GM12878 (cell line): ENCODE measurements at regions of chr14 and their contacts with region 1.

Region 1: GRCh38 chr14:71103662-71104484 is 196.6 kb downstream of the PCNX1 start:
- DNase-seq: peak; percentile 13
- ATAC-seq: peak; percentile 88
- H3K4me3 ChIP-seq: no peak overlapping the region
- H3K27ac ChIP-seq: no peak overlapping the region
- H3K4me1 ChIP-seq: no peaks in the 10 kb centered on the region
- H3K27me3 ChIP-seq: no peaks in the 10 kb centered on the region
- CTCF ChIP-seq: peak; percentile 65 to 82 (median 75)
- EP300 ChIP-seq: no peak
- POLR2A ChIP-seq: no peak
- RAD21 ChIP-seq: peak; percentile 69

Region 2: DNA sequence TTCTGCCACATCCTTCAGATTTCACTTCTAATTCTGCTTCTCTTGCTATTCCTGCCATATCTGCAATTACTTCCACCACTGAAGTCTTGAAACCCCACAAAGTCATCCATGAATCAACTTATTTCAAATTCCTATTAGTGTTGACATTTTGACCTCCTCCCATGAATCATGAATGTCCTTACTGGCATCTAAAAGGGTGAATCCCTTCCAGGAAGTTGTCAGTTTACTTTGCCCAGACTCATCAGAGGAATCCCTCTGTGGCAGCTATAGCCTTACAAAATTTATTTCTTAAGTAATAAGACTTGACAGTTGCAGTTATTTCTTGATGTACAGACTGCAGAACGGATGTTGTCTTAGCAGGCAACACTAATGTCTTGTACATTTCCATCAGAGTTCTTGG is 33.7 kb before region 1 on chr14:
- CTCF ChIA-PET with region 1: no interaction called
- POLR2A ChIA-PET with region 1: no interaction called
- RAD21 ChIA-PET with region 1: no interaction called
- SMC1A ChIA-PET with region 1: no interaction called
- in situ Hi-C with region 1: no loop called
- intact Hi-C with region 1: no loop called
- DNase-seq: no peak
- ATAC-seq: no peak
- H3K4me3 ChIP-seq: no peak overlapping the region
- H3K27ac ChIP-seq: no peak overlapping the region
- H3K4me1 ChIP-seq: no peaks in the 10 kb centered on the region
- H3K27me3 ChIP-seq: no peaks in the 10 kb centered on the region
- CTCF ChIP-seq: no peak
- EP300 ChIP-seq: no peak
- POLR2A ChIP-seq: no peak
- RAD21 ChIP-seq: no peak

Region 3: GRCh38 chr14:71116568-71117120 is 12.8 kb after region 1 on chr14:
- CTCF ChIA-PET with region 1: interaction called, 11 read pairs
- POLR2A ChIA-PET with region 1: interaction called, 6 read pairs
- RAD21 ChIA-PET with region 1: interaction called, 5 read pairs
- SMC1A ChIA-PET with region 1: interaction called, 3 read pairs
- in situ Hi-C with region 1: no loop called
- intact Hi-C with region 1: no loop called
- DNase-seq: peak; percentile 25
- ATAC-seq: peak; percentile 76
- H3K4me3 ChIP-seq: no peak overlapping the region
- H3K27ac ChIP-seq: no peak overlapping the region
- H3K4me1 ChIP-seq: peaks cover 4% of the 10 kb centered on the region
- H3K27me3 ChIP-seq: no peaks in the 10 kb centered on the region
- CTCF ChIP-seq: no peak
- EP300 ChIP-seq: no peak
- POLR2A ChIP-seq: no peak
- RAD21 ChIP-seq: no peak

Region 4: GRCh38 chr14:71138448-71139293 is 34.8 kb after region 1 on chr14:
- CTCF ChIA-PET with region 1: interaction called, 21 read pairs
- POLR2A ChIA-PET with region 1: no interaction called
- RAD21 ChIA-PET with region 1: interaction called, 4 read pairs
- SMC1A ChIA-PET with region 1: interaction called, 12 read pairs
- in situ Hi-C with region 1: no loop called
- intact Hi-C with region 1: no loop called
- DNase-seq: peak; percentile 9
- ATAC-seq: peak; percentile 85
- H3K4me3 ChIP-seq: no peak overlapping the region
- H3K27ac ChIP-seq: no peak overlapping the region
- H3K4me1 ChIP-seq: peaks cover 17% of the 10 kb centered on the region
- H3K27me3 ChIP-seq: no peaks in the 10 kb centered on the region
- CTCF ChIP-seq: peak; percentile 87 to 90 (median 88)
- EP300 ChIP-seq: no peak
- POLR2A ChIP-seq: no peak
- RAD21 ChIP-seq: peak; percentile 99